Mammary epithelial cell (primary cell): ENCODE measurements at regions of chr6 and their contacts with region 1.

Region 1: DNA sequence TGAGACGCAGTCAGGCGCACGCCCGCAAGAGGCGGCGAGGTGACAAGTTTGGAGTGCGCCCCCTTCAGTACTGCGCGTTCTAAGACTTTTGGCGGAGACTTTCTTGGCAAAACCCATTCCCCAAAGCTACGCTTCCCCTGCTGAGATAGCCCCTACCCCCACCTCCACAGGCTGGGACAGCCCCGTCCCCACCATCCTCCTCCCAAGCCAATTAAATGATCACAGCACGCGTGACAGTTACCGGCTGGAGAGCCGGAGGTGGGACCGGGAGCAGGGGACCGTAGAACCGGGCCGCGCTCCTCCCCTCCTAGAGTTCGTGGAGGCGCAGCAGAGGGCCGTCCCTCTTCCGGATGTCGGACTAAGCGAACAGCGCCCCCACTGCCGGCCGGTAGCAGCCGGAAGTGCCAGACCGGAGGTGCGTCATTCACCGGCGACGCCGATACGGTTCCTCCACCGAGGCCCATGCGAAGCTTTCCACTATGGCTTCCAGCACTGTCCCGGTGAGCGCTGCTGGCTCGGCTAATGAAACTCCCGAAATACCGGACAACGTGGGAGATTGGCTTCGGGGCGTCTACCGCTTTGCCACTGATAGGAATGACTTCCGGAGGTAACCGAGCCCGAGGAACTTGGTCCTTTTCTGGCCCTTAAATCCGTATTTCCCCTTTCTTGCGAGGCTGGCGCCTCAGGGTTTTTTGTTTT is at the start of gene TOMM6:
- DNase-seq: peak; percentile 92
- H3K4me3 ChIP-seq: peak within 1 kb of the TSS; percentile 63 to 98 (median 97)
- H3K27ac ChIP-seq: peak within 1 kb of the TSS; percentile 95
- H3K4me1 ChIP-seq: peaks cover 20% of the 10 kb centered on the region
- H3K27me3 ChIP-seq: no peaks in the 10 kb centered on the region
- CTCF ChIP-seq: peak; percentile 76 to 90
- total RNA-seq, gene TOMM6: 59.7 to 175 TPM

Region 2: GRCh38 chr6:41367700-41368099 is 419.7 kb before region 1 on chr6:
- CTCF ChIA-PET with region 1: no interaction called
- dilution Hi-C with region 1: no loop called
- in situ Hi-C with region 1: no loop called
- intact Hi-C with region 1: loop called (anchors 1 kb)
- DNase-seq: peak; percentile 24
- H3K4me3 ChIP-seq: no peak overlapping the region
- H3K27ac ChIP-seq: no peak overlapping the region
- H3K4me1 ChIP-seq: peaks cover 20% of the 10 kb centered on the region
- H3K27me3 ChIP-seq: no peaks in the 10 kb centered on the region
- CTCF ChIP-seq: peak; percentile 71 to 77

Region 3: GRCh38 chr6:41735427-41736356 is 51.7 kb before region 1 on chr6 and contains the start of gene TFEB:
- CTCF ChIA-PET with region 1: no interaction called
- dilution Hi-C with region 1: no loop called
- in situ Hi-C with region 1: no loop called
- intact Hi-C with region 1: loop called (anchors 2 kb)
- DNase-seq: peak; percentile 84
- H3K4me3 ChIP-seq: peak within 1 kb of the TSS; percentile 48 to 85 (median 75)
- H3K27ac ChIP-seq: peak within 1 kb of the TSS; percentile 14
- H3K4me1 ChIP-seq: peaks cover 33% of the 10 kb centered on the region
- H3K27me3 ChIP-seq: no peaks in the 10 kb centered on the region
- CTCF ChIP-seq: peak; percentile 82
- total RNA-seq, gene TFEB: 25.9 to 29.0 TPM

Region 4: DNA sequence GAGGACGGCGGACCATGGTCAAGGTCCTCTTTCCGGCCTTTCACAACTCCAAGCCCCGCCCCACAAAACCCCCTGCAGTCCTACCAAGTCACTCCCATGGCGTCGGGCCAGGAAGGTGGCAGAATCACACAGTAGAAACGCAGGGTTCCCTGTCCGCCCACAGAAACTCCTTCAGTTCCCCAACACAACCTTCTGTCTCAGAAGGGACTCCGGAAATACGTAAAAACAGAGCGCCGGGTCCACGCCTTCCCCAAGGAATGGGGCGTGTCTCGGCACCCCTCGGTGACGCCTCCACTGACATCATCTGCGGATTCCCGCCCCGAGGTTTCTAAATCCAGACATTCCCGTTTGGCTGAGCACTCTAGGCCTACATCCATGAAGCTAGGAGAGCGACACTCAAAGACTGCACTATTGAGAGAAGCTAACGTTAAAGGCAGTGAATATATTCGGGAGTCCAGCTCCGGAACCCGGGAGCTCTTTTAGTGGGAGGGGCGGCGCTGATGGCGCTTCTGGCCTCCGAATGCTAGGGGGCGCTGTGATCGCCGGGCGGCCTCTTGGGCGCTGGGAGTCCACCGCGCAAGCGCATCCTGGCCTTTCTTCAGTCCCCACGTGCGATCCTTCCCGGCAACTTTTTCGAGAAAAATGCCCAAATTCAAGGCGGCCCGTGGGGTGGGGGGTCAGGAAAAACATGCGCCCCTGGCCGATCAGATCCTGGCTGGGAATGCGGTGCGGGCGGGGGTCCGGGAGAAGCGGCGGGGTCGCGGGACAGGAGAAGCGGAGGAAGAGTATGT is 133.7 kb after region 1 on chr6 and contains the starts of genes BYSL and MED20:
- CTCF ChIA-PET with region 1: interaction called, 4 read pairs
- dilution Hi-C with region 1: no loop called
- in situ Hi-C with region 1: no loop called
- intact Hi-C with region 1: loop called (anchors 1 kb)
- DNase-seq: peak; percentile 98
- H3K4me3 ChIP-seq: peak within 1 kb of the TSS; percentile 75 to 92 (median 87)
- H3K27ac ChIP-seq: peak within 1 kb of the TSS; percentile 100
- H3K4me1 ChIP-seq: peaks cover 34% of the 10 kb centered on the region
- H3K27me3 ChIP-seq: no peaks in the 10 kb centered on the region
- CTCF ChIP-seq: peak; percentile 87 to 96
- total RNA-seq, gene BYSL: 14.2 to 52.5 TPM
- total RNA-seq, gene MED20: 22.4 to 23.7 TPM

Region 5: GRCh38 chr6:41941280-41942066 is 154.1 kb after region 1 on chr6 and contains the start of gene CCND3:
- CTCF ChIA-PET with region 1: no interaction called
- dilution Hi-C with region 1: no loop called
- in situ Hi-C with region 1: no loop called
- intact Hi-C with region 1: loop called (anchors 1 kb)
- DNase-seq: peak; percentile 90
- H3K4me3 ChIP-seq: peak within 1 kb of the TSS; percentile 82 to 95 (median 84)
- H3K27ac ChIP-seq: peak within 1 kb of the TSS; percentile 37
- H3K4me1 ChIP-seq: peaks cover 32% of the 10 kb centered on the region
- H3K27me3 ChIP-seq: no peaks in the 10 kb centered on the region
- CTCF ChIP-seq: no peak
- total RNA-seq, gene CCND3: 45.7 to 80.3 TPM

Region 6: DNA sequence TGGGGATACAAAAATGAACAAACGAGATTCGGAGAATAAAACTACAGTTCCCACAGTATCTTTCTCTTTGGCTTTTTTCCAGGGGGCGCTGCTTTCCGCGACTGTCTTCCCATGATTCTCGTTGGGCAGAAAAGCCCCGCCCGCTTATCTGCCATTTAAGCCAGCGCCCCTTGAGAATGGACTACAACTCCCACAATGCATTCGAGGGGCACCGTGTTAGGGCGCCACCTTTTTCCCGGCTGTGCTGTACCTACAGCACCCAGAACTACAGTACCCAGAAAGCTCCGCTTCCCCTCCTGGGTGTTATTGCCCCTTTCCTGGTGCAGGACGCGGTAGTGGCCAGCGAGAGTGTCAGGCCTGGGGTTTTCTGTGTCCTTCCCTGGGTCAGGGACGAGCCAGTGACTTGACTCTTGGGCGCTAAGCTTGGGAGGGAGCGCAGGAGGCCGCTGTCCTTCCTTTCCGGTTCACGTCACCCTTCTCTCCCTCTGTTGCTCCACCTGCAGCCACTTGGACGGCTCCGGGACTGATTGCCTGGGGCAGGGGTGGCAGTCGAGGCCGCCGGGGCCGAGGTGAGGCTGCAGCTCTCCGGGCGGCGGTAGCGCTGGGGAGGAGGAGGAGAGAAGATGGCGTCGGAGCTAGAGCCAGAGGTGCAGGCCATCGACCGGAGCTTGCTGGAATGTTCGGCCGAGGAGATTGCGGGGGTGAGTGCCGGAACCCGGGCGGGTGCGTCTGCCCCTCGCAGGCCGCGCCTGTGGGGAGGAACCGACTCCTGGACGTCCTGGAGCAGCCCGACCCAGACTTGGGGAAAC is 776.5 kb after region 1 on chr6 and contains the start of gene UBR2:
- CTCF ChIA-PET with region 1: no interaction called
- dilution Hi-C with region 1: no loop called
- in situ Hi-C with region 1: no loop called
- intact Hi-C with region 1: loop called (anchors 10 kb)
- DNase-seq: peak; percentile 98
- H3K4me3 ChIP-seq: peak within 1 kb of the TSS; percentile 78 to 84 (median 83)
- H3K27ac ChIP-seq: peak within 1 kb of the TSS; percentile 79
- H3K4me1 ChIP-seq: peaks cover 4% of the 10 kb centered on the region
- H3K27me3 ChIP-seq: no peaks in the 10 kb centered on the region
- CTCF ChIP-seq: peak in 1 of 2 donors; percentile 39
- total RNA-seq, gene UBR2: 23.8 to 31.3 TPM